HCT116 (cell line): ENCODE measurements at regions of chr10 and their contacts with region 1.

Region 1: GRCh38 chr10:118543714-118544400 is 51.6 kb downstream of the PRLHR start:
- DNase-seq: peak; percentile 63
- ATAC-seq: peak; percentile 99
- H3K4me3 ChIP-seq: no peak overlapping the region
- H3K27ac ChIP-seq: no peak overlapping the region
- H3K4me1 ChIP-seq: peaks cover 0 to 3% of the 10 kb centered on the region in 2 experiments; a peak in 1 of 4 replicates
- H3K27me3 ChIP-seq: peaks cover 30% of the 10 kb centered on the region; the same call in 1 of the 2 replicates
- CTCF ChIP-seq: peak; percentile 88 to 94 (median 92)
- POLR2A ChIP-seq: no peak
- RAD21 ChIP-seq: peak; percentile 92

Region 2: GRCh38 chr10:118259288-118259906 is 284.5 kb before region 1 on chr10:
- CTCF ChIA-PET with region 1: no interaction called
- POLR2A ChIA-PET with region 1: no interaction called
- RAD21 ChIA-PET with region 1: no interaction called
- intact Hi-C with region 1: loop called (anchors 10 kb)
- DNase-seq: peak; percentile 32
- ATAC-seq: peak; percentile 98
- H3K4me3 ChIP-seq: no peak overlapping the region
- H3K27ac ChIP-seq: no peak overlapping the region
- H3K4me1 ChIP-seq: no peaks in the 10 kb centered on the region
- H3K27me3 ChIP-seq: peaks cover 54% of the 10 kb centered on the region
- CTCF ChIP-seq: peak; percentile 61 to 99 (median 92); a peak in 5 of 6 replicates
- POLR2A ChIP-seq: no peak
- RAD21 ChIP-seq: peak; percentile 70

Region 3: GRCh38 chr10:118557946-118558345 is 14.1 kb after region 1 on chr10:
- CTCF ChIA-PET with region 1: interaction called, 12 read pairs
- POLR2A ChIA-PET with region 1: no interaction called
- RAD21 ChIA-PET with region 1: no interaction called
- intact Hi-C with region 1: no loop called
- DNase-seq: no peak
- ATAC-seq: no peak
- H3K4me3 ChIP-seq: no peak overlapping the region
- H3K27ac ChIP-seq: no peak overlapping the region
- H3K4me1 ChIP-seq: no peaks in the 10 kb centered on the region
- H3K27me3 ChIP-seq: peaks cover 7% of the 10 kb centered on the region; the same call in 1 of the 2 replicates
- CTCF ChIP-seq: no peak
- POLR2A ChIP-seq: no peak
- RAD21 ChIP-seq: no peak